ENCODE measurements at regions of chr10 and their contacts with region 1.

Region 1: DNA sequence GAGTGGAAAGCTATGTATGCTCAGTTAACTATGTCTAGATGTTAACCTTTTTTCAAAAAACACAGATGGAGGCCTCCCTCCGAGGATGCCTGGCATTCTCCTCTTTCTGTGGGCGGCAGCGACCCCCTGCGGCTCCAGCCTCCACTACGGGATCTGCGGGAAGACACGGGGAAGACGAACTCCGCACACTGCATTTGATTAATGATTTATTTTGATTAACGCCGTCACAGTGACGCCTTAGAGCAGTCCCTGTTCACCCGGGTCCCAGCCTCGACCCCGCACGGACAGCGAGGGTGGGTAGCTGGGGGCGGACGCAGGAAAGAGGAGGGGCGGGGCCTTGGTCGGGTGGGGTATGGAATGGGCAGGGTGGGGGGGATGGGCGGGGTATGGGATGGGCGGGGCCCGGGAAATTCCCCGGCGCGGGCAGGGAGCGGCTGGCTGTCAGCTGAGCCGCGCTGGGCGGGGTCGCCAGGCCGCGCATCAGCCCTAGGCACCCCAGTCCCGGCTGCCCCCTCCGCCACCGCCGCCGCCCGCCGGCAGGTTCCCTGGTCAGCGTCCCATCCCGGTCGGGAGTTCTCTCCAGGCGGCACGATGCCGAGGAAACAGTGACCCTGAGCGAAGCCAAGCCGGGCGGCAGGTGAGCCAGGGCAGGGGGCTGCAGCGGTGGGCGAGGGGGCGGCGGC is at the start of gene OPTN:
- DNase-seq: peak; percentile 63 to 92 (median 76)
- ATAC-seq: peak; percentile 79
- H3K4me3 ChIP-seq: peak within 1 kb of the TSS; percentile 94
- H3K4me3 Mint-ChIP-seq: peak within 1 kb of the TSS; percentile 94
- H3K27ac ChIP-seq: peak within 1 kb of the TSS; percentile 90 to 92
- H3K27ac Mint-ChIP-seq: peak within 1 kb of the TSS; percentile 95
- H3K4me1 ChIP-seq: peaks cover 48% of the 10 kb centered on the region
- H3K4me1 Mint-ChIP-seq: peaks cover 51% of the 10 kb centered on the region
- H3K27me3 ChIP-seq: no peaks in the 10 kb centered on the region
- H3K27me3 Mint-ChIP-seq: no peaks in the 10 kb centered on the region
- CTCF ChIP-seq: peak; percentile 42
- total RNA-seq, gene OPTN: 86.8 to 99.6 TPM

Region 2: GRCh38 chr10:12264204-12264940 is 835.4 kb before region 1 on chr10:
- CTCF ChIA-PET with region 1: no interaction called
- POLR2A ChIA-PET with region 1: no interaction called
- intact Hi-C with region 1: loop called (anchors 5 kb)
- DNase-seq: peak; percentile 49 to 85 (median 67)
- ATAC-seq: peak; percentile 82
- H3K4me3 ChIP-seq: peak overlapping the region; percentile 53
- H3K4me3 Mint-ChIP-seq: peak overlapping the region; percentile 71
- H3K27ac ChIP-seq: no peak overlapping the region
- H3K27ac Mint-ChIP-seq: peak overlapping the region; percentile 39
- H3K4me1 ChIP-seq: peaks cover 14% of the 10 kb centered on the region
- H3K4me1 Mint-ChIP-seq: peaks cover 14% of the 10 kb centered on the region
- H3K27me3 ChIP-seq: no peaks in the 10 kb centered on the region
- H3K27me3 Mint-ChIP-seq: no peaks in the 10 kb centered on the region
- CTCF ChIP-seq: peak; percentile 93

Region 3: DNA sequence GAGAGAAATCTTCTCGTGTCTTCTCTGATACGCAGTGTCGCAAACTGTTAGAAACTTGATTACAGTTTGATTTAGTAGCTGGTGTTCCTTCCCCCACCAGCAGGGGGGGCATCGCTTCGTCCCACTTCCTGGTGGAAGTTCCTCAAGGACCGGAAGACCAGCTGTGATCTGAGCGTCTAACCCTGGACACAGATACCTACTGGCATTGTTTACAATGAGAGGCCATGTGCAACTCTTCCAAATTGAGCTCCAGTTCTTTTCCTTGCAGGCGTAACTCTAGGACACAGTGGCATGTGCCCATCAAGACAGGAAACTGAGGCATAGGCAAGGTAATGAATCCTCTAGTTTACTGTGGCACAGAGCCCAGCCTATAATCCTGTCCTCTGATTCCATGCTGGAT is 317.3 kb before region 1 on chr10:
- CTCF ChIA-PET with region 1: no interaction called
- POLR2A ChIA-PET with region 1: no interaction called
- intact Hi-C with region 1: loop called in 1 of 2 experiments (anchors 10 kb)
- DNase-seq: peak in 9 of 14 experiments; percentile 10 to 49 (median 30)
- ATAC-seq: no peak
- H3K4me3 ChIP-seq: no peak overlapping the region
- H3K4me3 Mint-ChIP-seq: no peak overlapping the region
- H3K27ac ChIP-seq: no peak overlapping the region
- H3K27ac Mint-ChIP-seq: no peak overlapping the region
- H3K4me1 ChIP-seq: no peaks in the 10 kb centered on the region
- H3K4me1 Mint-ChIP-seq: no peaks in the 10 kb centered on the region
- H3K27me3 ChIP-seq: no peaks in the 10 kb centered on the region
- H3K27me3 Mint-ChIP-seq: no peaks in the 10 kb centered on the region
- CTCF ChIP-seq: peak; percentile 61

Region 4: DNA sequence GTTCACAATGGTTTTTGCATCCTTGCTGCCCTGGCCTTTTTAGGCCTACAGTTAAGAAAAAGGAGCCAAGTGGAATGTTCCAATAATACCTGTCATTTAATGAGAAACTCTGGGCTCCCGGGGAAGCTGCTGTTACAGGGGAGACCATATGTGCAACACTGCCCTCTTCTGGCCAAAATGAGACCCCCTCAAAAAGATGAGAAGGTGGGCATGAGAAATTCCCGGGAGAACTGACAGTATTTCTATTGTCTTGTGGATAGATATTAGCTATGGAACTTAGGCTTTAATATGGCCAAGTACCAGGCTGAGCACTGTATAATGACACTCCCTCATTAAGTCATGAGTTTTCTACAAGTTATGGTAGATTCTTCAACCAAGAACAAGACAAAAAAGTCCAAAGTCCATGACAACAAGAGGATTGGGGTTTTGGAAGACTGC is 197.7 kb before region 1 on chr10:
- CTCF ChIA-PET with region 1: no interaction called
- POLR2A ChIA-PET with region 1: no interaction called
- intact Hi-C with region 1: loop called in 1 of 2 experiments (anchors 2 kb)
- DNase-seq: peak in 13 of 14 experiments; percentile 3 to 68 (median 22)
- ATAC-seq: no peak
- H3K4me3 ChIP-seq: no peak overlapping the region
- H3K4me3 Mint-ChIP-seq: no peak overlapping the region
- H3K27ac ChIP-seq: no peak overlapping the region
- H3K27ac Mint-ChIP-seq: no peak overlapping the region
- H3K4me1 ChIP-seq: no peaks in the 10 kb centered on the region
- H3K4me1 Mint-ChIP-seq: no peaks in the 10 kb centered on the region
- H3K27me3 ChIP-seq: peaks cover 0 to 2% of the 10 kb centered on the region in 2 experiments
- H3K27me3 Mint-ChIP-seq: peaks cover 20% of the 10 kb centered on the region
- CTCF ChIP-seq: peak; percentile 75

Region 5: DNA sequence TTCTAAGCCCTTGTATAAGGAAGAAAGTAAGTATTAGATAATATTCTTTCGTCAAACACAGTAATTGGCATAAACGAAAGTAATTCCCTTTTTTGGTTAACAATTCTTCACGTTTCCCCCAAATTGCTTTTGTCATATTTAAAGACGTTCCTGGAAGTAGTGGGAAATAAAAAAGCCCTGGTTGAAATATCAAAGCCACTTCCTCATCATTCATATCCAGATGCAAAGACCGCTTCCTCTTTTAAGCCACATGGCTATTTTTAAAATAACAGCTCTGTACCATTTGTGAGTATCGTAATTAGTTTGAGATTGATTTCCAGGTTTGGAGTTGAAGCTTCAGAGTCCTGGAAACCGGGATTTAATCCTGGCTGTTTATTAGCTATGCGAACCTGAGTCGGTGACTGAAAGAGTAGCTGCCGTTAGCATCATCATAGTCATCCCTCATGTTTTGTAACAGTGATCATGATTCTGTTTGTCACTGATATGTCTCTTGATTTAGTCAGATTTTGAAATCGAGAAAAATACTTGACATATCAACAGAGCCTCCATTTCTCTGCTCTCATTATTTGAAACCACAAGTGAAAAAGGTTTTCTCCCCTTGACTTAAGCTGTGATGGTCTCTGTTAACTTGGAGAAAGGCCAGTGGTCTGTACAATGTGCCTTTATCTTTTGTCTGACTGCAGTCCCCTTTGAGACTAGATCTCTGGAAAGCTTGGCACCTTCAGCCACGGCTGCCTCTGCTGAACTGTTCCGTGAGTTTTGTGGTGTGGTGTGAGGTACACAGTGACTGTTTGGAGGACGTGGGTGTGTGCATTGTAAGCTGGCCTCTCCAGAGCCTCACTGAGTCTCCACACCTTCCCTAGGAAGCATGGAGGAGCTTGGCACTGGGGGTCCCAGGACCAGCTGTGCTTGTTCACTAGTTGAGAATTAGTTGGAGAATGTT is 18.3 kb after region 1 on chr10:
- CTCF ChIA-PET with region 1: interaction called, 11 read pairs
- POLR2A ChIA-PET with region 1: interaction called, 4 read pairs
- intact Hi-C with region 1: no loop called
- DNase-seq: peak in 2 of 14 experiments; percentile 9 to 25
- ATAC-seq: no peak
- H3K4me3 ChIP-seq: no peak overlapping the region
- H3K4me3 Mint-ChIP-seq: no peak overlapping the region
- H3K27ac ChIP-seq: no peak overlapping the region
- H3K27ac Mint-ChIP-seq: no peak overlapping the region
- H3K4me1 ChIP-seq: peaks cover 24% of the 10 kb centered on the region
- H3K4me1 Mint-ChIP-seq: peaks cover 34% of the 10 kb centered on the region
- H3K27me3 ChIP-seq: no peaks in the 10 kb centered on the region
- H3K27me3 Mint-ChIP-seq: no peaks in the 10 kb centered on the region
- CTCF ChIP-seq: no peak

Region 6: DNA sequence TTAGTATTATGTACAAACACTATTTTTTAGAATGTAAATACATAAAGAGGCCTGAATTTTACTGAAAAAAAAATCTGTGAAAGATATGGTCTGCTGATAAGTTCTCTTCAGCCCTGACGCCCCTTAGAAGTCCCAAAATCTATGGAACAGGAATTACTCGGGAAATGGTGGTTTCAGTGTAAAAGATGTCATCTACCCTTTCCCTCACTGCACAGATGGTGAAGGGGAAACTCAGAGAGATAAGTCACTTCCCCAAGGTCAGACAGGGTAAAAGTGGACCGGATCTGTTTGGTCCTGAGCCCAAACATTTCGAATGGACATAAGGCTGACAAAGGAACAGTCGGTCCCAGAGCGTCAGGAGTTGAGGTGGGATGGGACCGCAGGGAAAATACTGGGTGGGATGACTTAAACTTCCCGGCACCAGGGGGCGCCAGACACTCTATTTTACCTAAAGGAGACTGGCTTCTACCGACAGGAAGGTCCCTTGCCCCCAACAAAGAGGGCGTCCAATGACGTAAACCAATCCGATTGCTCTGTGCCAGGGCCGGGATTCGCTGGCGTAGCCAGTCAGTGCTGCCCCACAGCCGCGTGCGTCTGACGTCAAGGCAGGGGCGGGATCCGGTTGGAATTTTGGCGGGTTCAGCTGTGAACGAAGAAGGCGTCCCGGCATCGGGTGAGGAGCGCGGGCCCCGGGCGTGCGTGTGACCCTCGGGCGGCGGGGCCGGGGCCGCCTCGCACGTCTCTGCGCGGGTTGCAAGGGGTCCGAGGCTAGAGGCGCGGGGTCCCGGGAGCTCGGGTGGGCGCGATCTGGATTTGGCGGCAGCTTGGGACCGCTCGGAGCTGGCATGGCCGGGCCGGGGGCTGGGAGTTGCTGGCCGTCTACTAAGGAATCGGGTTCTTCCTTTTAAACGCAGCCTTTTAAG is 61.4 kb after region 1 on chr10 and contains the start of gene MCM10:
- CTCF ChIA-PET with region 1: interaction called, 4 read pairs
- POLR2A ChIA-PET with region 1: interaction called, 3 read pairs
- intact Hi-C with region 1: loop called in 1 of 2 experiments (anchors 2 kb)
- DNase-seq: peak; percentile 93 to 99 (median 96)
- ATAC-seq: peak; percentile 100
- H3K4me3 ChIP-seq: peak within 1 kb of the TSS; percentile 53
- H3K4me3 Mint-ChIP-seq: peak within 1 kb of the TSS; percentile 91
- H3K27ac ChIP-seq: peak within 1 kb of the TSS in 1 of 2 donors; percentile 24
- H3K27ac Mint-ChIP-seq: peak within 1 kb of the TSS; percentile 72
- H3K4me1 ChIP-seq: peaks cover 12% of the 10 kb centered on the region
- H3K4me1 Mint-ChIP-seq: peaks cover 16% of the 10 kb centered on the region
- H3K27me3 ChIP-seq: no peaks in the 10 kb centered on the region
- H3K27me3 Mint-ChIP-seq: no peaks in the 10 kb centered on the region
- CTCF ChIP-seq: peak; percentile 94
- total RNA-seq, gene MCM10: 0.16 to 0.50 TPM

Region 7: DNA sequence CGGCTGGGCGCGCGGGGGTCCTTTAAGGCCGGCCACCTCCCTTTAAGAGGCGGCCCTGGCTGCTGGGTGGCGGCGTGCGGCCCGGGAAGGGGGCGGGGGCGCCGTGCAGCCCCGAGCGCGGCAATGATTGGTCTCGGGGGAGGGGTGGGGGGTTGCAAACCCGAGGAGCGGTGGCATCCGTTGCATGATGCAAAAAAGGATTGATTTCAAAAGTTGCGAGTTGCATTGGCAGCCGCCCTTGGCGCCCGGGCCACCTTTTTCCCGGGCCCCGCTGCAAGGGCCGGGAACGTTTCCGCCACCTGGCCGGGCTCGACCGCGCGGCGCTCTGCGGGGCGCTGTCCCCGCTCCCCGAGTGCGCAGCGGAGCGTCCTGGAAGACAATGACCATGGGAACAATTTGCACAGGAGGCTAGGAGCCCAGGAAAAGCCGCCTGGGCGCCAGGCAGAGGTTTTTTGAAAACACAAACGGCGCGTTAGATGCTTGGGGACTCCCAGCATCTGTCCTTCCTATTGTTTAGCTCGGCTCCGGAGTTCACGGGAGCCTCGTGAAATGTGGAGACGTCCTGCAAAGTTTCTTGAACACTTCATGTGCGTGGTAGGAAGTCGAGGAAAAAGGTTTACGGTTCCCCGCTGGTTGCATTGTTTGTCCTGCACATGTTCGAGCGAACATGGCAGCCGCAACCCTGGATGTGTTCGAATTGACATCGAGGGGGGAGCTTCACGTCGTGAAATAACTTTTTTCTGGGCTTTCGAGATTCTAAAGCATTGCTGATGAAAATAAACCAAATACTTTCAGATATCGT is 248.6 kb after region 1 on chr10 and contains the start of gene SEPHS1:
- CTCF ChIA-PET with region 1: interaction called, 4 read pairs
- POLR2A ChIA-PET with region 1: interaction called, 13 read pairs
- intact Hi-C with region 1: loop called in 1 of 2 experiments (anchors 5 kb)
- DNase-seq: peak; percentile 67 to 91 (median 81)
- ATAC-seq: peak; percentile 69
- H3K4me3 ChIP-seq: peak within 1 kb of the TSS; percentile 91
- H3K4me3 Mint-ChIP-seq: peak within 1 kb of the TSS; percentile 98
- H3K27ac ChIP-seq: peak within 1 kb of the TSS; percentile 63 to 83
- H3K27ac Mint-ChIP-seq: peak within 1 kb of the TSS; percentile 93
- H3K4me1 ChIP-seq: peaks cover 50% of the 10 kb centered on the region
- H3K4me1 Mint-ChIP-seq: peaks cover 69% of the 10 kb centered on the region
- H3K27me3 ChIP-seq: no peaks in the 10 kb centered on the region
- H3K27me3 Mint-ChIP-seq: no peaks in the 10 kb centered on the region
- CTCF ChIP-seq: no peak
- total RNA-seq, gene SEPHS1: 13.1 to 17.9 TPM

Measured in CD4-positive, alpha-beta T cell (primary cell).